ENCODE measurements at regions of chr1 and their contacts with region 1.

Region 1: GRCh38 chr1:177959811-177960515 is 9.9 kb downstream of the SEC16B start:
- DNase-seq: peak in 1 of 2 experiments; percentile 32
- H3K4me3 ChIP-seq: no peak overlapping the region
- H3K4me3 Mint-ChIP-seq: no peak overlapping the region
- H3K27ac Mint-ChIP-seq: no peak overlapping the region
- H3K4me1 ChIP-seq: 0 out of 2 replicates have a peak, but pooled peaks cover 4% of the 10 kb centered on the region
- H3K4me1 Mint-ChIP-seq: no peaks in the 10 kb centered on the region
- H3K27me3 ChIP-seq: no peaks in the 10 kb centered on the region
- H3K27me3 Mint-ChIP-seq: no peaks in the 10 kb centered on the region
- CTCF ChIP-seq: peak; percentile 36 to 44

Region 2: GRCh38 chr1:177780096-177780700 is 179.8 kb before region 1 on chr1:
- CTCF ChIA-PET with region 1: no interaction called
- POLR2A ChIA-PET with region 1: no interaction called
- intact Hi-C with region 1: no loop called
- DNase-seq: peak in 1 of 2 experiments; percentile 42
- H3K4me3 ChIP-seq: no peak overlapping the region
- H3K4me3 Mint-ChIP-seq: no peak overlapping the region
- H3K27ac Mint-ChIP-seq: no peak overlapping the region
- H3K4me1 ChIP-seq: no peaks in the 10 kb centered on the region
- H3K4me1 Mint-ChIP-seq: no peaks in the 10 kb centered on the region
- H3K27me3 ChIP-seq: no peaks in the 10 kb centered on the region; the same call in 1 of the 2 replicates
- H3K27me3 Mint-ChIP-seq: peaks cover 14% of the 10 kb centered on the region
- CTCF ChIP-seq: peak; percentile 60 to 66

Region 3: GRCh38 chr1:178031856-178032320 is 71.9 kb after region 1 on chr1:
- CTCF ChIA-PET with region 1: no interaction called
- POLR2A ChIA-PET with region 1: no interaction called
- intact Hi-C with region 1: loop called (anchors 1 kb)
- DNase-seq: peak; percentile 80 to 83
- H3K4me3 ChIP-seq: no peak overlapping the region
- H3K4me3 Mint-ChIP-seq: no peak overlapping the region
- H3K27ac Mint-ChIP-seq: no peak overlapping the region
- H3K4me1 ChIP-seq: peaks cover 29% of the 10 kb centered on the region
- H3K4me1 Mint-ChIP-seq: peaks cover 13% of the 10 kb centered on the region
- H3K27me3 ChIP-seq: no peaks in the 10 kb centered on the region
- H3K27me3 Mint-ChIP-seq: no peaks in the 10 kb centered on the region
- CTCF ChIP-seq: peak; percentile 76 to 91

Region 4: GRCh38 chr1:178055779-178056471 is 96.0 kb after region 1 on chr1:
- CTCF ChIA-PET with region 1: no interaction called
- POLR2A ChIA-PET with region 1: no interaction called
- intact Hi-C with region 1: loop called (anchors 1 kb)
- DNase-seq: peak; percentile 37 to 44
- H3K4me3 ChIP-seq: no peak overlapping the region
- H3K4me3 Mint-ChIP-seq: no peak overlapping the region
- H3K27ac Mint-ChIP-seq: peak overlapping the region; percentile 1
- H3K4me1 ChIP-seq: peaks cover 14% of the 10 kb centered on the region
- H3K4me1 Mint-ChIP-seq: peaks cover 26% of the 10 kb centered on the region
- H3K27me3 ChIP-seq: no peaks in the 10 kb centered on the region
- H3K27me3 Mint-ChIP-seq: no peaks in the 10 kb centered on the region
- CTCF ChIP-seq: peak in 1 of 2 experiments; percentile 39

Region 5: DNA sequence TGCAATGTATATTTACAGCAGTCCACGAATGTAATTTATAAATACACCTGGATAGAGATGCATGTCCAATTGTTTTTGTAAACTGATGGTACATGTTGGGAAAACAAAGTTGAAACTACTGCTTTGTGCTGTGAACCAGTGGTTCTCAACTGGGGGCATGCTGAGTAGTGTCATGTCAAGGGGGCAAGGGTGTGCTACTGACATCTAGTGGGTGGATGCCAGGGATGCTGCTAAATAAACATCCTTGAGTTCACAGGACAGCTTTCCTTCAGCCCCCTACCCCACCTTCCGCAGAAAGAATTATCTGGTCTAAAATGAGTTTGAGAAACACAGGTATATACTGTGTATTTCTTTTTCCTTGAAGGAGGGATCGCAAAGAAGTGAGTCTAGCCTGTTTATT is 229.9 kb after region 1 on chr1:
- CTCF ChIA-PET with region 1: no interaction called
- POLR2A ChIA-PET with region 1: no interaction called
- intact Hi-C with region 1: loop called (anchors 2 kb)
- DNase-seq: peak; percentile 60 to 62
- H3K4me3 ChIP-seq: no peak overlapping the region
- H3K4me3 Mint-ChIP-seq: no peak overlapping the region
- H3K27ac Mint-ChIP-seq: no peak overlapping the region
- H3K4me1 ChIP-seq: peaks cover 10% of the 10 kb centered on the region
- H3K4me1 Mint-ChIP-seq: peaks cover 19% of the 10 kb centered on the region
- H3K27me3 ChIP-seq: no peaks in the 10 kb centered on the region
- H3K27me3 Mint-ChIP-seq: no peaks in the 10 kb centered on the region
- CTCF ChIP-seq: peak; percentile 72 to 77

Region 6: DNA sequence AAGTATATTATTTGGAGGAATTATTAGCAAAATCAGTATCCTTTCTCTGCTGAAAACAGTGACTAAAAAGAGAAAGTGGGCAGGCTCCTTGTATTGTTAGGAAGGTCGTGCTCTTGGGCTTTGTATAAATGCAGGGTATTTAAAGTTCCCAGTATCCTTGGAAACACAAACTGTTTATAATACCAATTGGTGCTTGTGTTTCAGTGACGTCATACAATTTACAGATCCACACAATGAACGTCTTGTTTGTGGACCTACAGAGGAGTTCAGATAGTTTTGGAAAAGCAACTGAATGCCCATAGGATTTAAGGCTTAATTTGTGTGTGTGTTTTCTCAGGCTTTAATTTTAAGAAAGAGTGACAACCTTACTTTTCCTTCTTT is 302.1 kb after region 1 on chr1:
- CTCF ChIA-PET with region 1: no interaction called
- POLR2A ChIA-PET with region 1: no interaction called
- intact Hi-C with region 1: no loop called
- DNase-seq: no peak
- H3K4me3 ChIP-seq: no peak overlapping the region
- H3K4me3 Mint-ChIP-seq: no peak overlapping the region
- H3K27ac Mint-ChIP-seq: no peak overlapping the region
- H3K4me1 ChIP-seq: peaks cover 22% of the 10 kb centered on the region
- H3K4me1 Mint-ChIP-seq: peaks cover 11% of the 10 kb centered on the region
- H3K27me3 ChIP-seq: no peaks in the 10 kb centered on the region
- H3K27me3 Mint-ChIP-seq: no peaks in the 10 kb centered on the region
- CTCF ChIP-seq: no peak

Region 7: GRCh38 chr1:178282949-178283367 is 323.0 kb after region 1 on chr1:
- CTCF ChIA-PET with region 1: no interaction called
- POLR2A ChIA-PET with region 1: no interaction called
- intact Hi-C with region 1: loop called (anchors 1 kb)
- DNase-seq: no peak
- H3K4me3 ChIP-seq: no peak overlapping the region
- H3K4me3 Mint-ChIP-seq: no peak overlapping the region
- H3K27ac Mint-ChIP-seq: no peak overlapping the region
- H3K4me1 ChIP-seq: peaks cover 2% of the 10 kb centered on the region; the same call in 1 of the 2 replicates
- H3K4me1 Mint-ChIP-seq: peaks cover 20% of the 10 kb centered on the region
- H3K27me3 ChIP-seq: no peaks in the 10 kb centered on the region
- H3K27me3 Mint-ChIP-seq: no peaks in the 10 kb centered on the region
- CTCF ChIP-seq: peak in 1 of 2 experiments; percentile 45

Region 8: GRCh38 chr1:178501705-178502329 is 541.9 kb after region 1 on chr1:
- CTCF ChIA-PET with region 1: no interaction called
- POLR2A ChIA-PET with region 1: no interaction called
- intact Hi-C with region 1: loop called (anchors 10 kb)
- DNase-seq: peak; percentile 75 to 86
- H3K4me3 ChIP-seq: no peak overlapping the region
- H3K4me3 Mint-ChIP-seq: no peak overlapping the region
- H3K27ac Mint-ChIP-seq: no peak overlapping the region
- H3K4me1 ChIP-seq: peaks cover 8% of the 10 kb centered on the region
- H3K4me1 Mint-ChIP-seq: peaks cover 9% of the 10 kb centered on the region
- H3K27me3 ChIP-seq: no peaks in the 10 kb centered on the region
- H3K27me3 Mint-ChIP-seq: no peaks in the 10 kb centered on the region
- CTCF ChIP-seq: peak; percentile 88 to 95